ENCODE measurements at regions of chr4 and their contacts with region 1.

Region 1: GRCh38 chr4:68630373-68630772 is 40.1 kb downstream of the UGT2B15 start:
- DNase-seq: no peak
- ATAC-seq: no peak
- H3K4me3 ChIP-seq: no peak overlapping the region
- H3K27ac ChIP-seq: no peak overlapping the region
- H3K4me1 ChIP-seq: peaks cover 0 to 5% (median 0%) of the 10 kb centered on the region in 9 donors
- H3K27me3 ChIP-seq: no peaks in the 10 kb centered on the region
- CTCF ChIP-seq: no peak

Region 2: DNA sequence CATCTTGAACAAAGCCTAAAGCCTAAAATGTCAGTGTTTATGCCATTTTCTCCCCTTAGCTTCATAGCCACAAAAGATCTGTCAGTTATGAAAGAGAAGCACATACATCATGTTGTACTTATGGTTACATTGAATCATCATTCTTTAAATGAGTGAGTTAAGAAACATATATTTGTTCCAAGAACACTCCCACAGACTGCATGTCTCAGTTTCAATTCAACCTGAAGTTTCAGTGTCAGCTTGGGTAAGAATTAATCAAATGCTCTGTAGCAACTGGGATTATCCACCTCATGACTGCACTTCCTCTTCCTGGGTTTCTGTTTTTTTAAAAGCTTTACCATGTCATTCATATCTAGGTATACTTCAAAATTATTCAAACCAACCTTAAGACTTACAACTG is 380.9 kb before region 1 on chr4:
- intact Hi-C with region 1: no loop called
- DNase-seq: no peak
- ATAC-seq: no peak
- H3K4me3 ChIP-seq: no peak overlapping the region
- H3K27ac ChIP-seq: no peak overlapping the region
- H3K4me1 ChIP-seq: no peaks in the 10 kb centered on the region
- H3K27me3 ChIP-seq: no peaks in the 10 kb centered on the region
- CTCF ChIP-seq: no peak

Region 3: DNA sequence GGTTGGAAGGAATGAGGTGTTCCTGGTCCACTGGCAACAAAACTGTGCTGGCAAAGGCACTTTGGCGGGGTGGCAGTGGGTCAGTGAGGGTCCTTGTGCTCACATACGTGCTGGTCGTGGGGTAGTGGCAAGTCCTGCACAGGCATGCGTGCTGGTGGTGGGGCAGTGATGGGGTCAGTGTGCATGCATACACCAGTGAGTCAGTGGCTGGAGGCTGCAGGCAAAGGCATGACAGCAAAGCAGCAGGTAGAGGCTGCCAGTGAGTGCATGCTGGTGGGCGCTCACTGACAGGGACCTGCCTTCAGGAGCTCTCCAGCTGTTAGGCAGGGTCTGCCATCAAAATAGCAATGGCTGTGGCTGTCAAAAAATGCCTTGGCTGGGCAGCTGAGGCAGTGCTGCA is 141.0 kb before region 1 on chr4:
- intact Hi-C with region 1: loop called in 1 of 10 experiments (anchors 10 kb)
- DNase-seq: no peak
- ATAC-seq: no peak
- H3K4me3 ChIP-seq: no peak overlapping the region
- H3K27ac ChIP-seq: no peak overlapping the region
- H3K4me1 ChIP-seq: no peaks in the 10 kb centered on the region
- H3K27me3 ChIP-seq: no peaks in the 10 kb centered on the region
- CTCF ChIP-seq: no peak